Activated naive CD4-positive, alpha-beta T cell treated with anti-CD3 and anti-CD28 coated beads for 36 hours (primary cell): ENCODE measurements at regions of chr7 and their contacts with region 1.

Region 1: GRCh38 chr7:104848138-104848990 is 165.6 kb upstream of the KMT2E start:
- DNase-seq: peak; percentile 75
- H3K4me3 Mint-ChIP-seq: no peak overlapping the region
- H3K27ac Mint-ChIP-seq: no peak overlapping the region
- H3K4me1 Mint-ChIP-seq: no peaks in the 10 kb centered on the region
- H3K27me3 Mint-ChIP-seq: peaks cover 9% of the 10 kb centered on the region

Region 2: GRCh38 chr7:104231054-104232046 is 617.0 kb before region 1 on chr7:
- CTCF ChIA-PET with region 1: interaction called, 21 read pairs
- intact Hi-C with region 1: loop called (anchors 1 kb)
- DNase-seq: peak; percentile 56
- H3K4me3 Mint-ChIP-seq: no peak overlapping the region
- H3K27ac Mint-ChIP-seq: no peak overlapping the region
- H3K4me1 Mint-ChIP-seq: no peaks in the 10 kb centered on the region
- H3K27me3 Mint-ChIP-seq: peaks cover 14% of the 10 kb centered on the region

Region 3: DNA sequence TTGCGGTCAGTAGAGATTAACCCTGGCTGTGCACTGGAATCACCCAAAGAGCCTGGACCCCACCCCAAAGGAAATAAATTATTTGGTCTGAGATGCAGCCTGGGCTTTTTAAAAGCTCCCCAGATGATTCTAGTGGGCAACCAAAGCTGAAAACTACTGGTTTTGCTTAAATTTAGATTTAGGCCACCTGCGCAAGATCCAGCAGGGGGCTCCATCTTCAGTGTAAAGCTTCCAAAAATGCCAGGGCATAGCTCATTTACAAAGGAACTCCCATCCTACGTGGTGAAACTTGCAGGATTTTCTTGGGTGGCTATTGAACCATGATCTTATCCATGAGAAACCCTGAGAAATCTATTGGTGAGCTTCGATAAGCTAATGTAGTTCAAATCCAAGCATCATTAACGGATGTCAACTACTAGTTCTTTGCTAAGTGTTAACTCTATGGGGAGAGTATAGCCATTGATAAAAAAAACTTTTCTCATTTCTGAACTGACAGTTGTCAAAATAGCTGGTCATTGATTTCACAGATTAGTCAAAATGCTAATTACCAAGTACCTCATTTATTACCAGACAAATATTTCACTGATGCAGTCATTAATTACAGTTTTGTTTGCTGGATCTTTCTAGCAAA is 204.7 kb before region 1 on chr7:
- CTCF ChIA-PET with region 1: interaction called, 18 read pairs
- intact Hi-C with region 1: loop called (anchors 1 kb)
- DNase-seq: peak; percentile 12
- H3K4me3 Mint-ChIP-seq: no peak overlapping the region
- H3K27ac Mint-ChIP-seq: no peak overlapping the region
- H3K4me1 Mint-ChIP-seq: no peaks in the 10 kb centered on the region
- H3K27me3 Mint-ChIP-seq: peaks cover 19% of the 10 kb centered on the region

Region 4: GRCh38 chr7:104825099-104825498 is 23.3 kb before region 1 on chr7:
- CTCF ChIA-PET with region 1: interaction called, 13 read pairs
- intact Hi-C with region 1: no loop called
- DNase-seq: no peak
- H3K4me3 Mint-ChIP-seq: no peak overlapping the region
- H3K27ac Mint-ChIP-seq: no peak overlapping the region
- H3K4me1 Mint-ChIP-seq: no peaks in the 10 kb centered on the region
- H3K27me3 Mint-ChIP-seq: no peaks in the 10 kb centered on the region

Region 5: DNA sequence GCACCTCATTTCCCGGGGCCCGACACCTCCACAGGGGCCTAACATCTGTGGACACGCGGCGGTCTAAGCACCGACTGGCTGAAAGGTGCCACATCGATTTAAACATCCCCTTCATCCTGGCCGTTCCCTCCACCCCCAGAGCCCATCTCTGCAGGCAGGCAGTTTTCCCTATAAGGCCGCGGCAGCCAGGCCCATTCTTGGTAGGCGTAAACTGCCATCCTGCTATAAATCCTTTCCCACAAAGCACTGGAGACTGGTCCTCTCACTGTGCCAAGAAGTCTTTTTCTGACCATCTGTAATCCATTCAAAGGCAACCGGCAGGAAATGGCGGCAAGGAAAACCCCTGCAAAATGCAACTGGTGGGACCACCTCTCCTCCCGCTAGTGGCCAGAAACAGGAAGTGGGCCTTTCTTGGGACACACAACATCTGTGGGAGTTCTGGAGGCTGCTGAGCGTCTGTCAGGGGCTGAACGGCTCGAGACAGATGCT is 1005.6 kb after region 1 on chr7:
- CTCF ChIA-PET with region 1: no interaction called
- intact Hi-C with region 1: no loop called
- DNase-seq: no peak
- H3K4me3 Mint-ChIP-seq: no peak overlapping the region
- H3K27ac Mint-ChIP-seq: no peak overlapping the region
- H3K4me1 Mint-ChIP-seq: peaks cover 56% of the 10 kb centered on the region
- H3K27me3 Mint-ChIP-seq: no peaks in the 10 kb centered on the region